Dorsolateral prefrontal cortex (tissue), 120 donors: ENCODE measurements at regions of chr20 and their contacts with region 1.

Region 1: GRCh38 chr20:11917663-11918062 is at the start of gene BTBD3:
- DNase-seq: peak in 9 of 10 donors; percentile 55 to 88 (median 75)
- H3K4me3 ChIP-seq: peak within 1 kb of the TSS; percentile 33 to 79 (median 61)
- H3K27ac ChIP-seq: peak within 1 kb of the TSS; percentile 41 to 95 (median 89)
- H3K27me3 ChIP-seq: no peaks in the 10 kb centered on the region
- CTCF ChIP-seq: peak in 39 of 56 donors; percentile 12 to 56 (median 33)
- total RNA-seq, gene BTBD3: 72.4 to 185 (median 136) TPM

Region 2: GRCh38 chr20:11676630-11677284 is 240.9 kb before region 1 on chr20:
- intact Hi-C with region 1: loop called in 1 of 2 experiments (anchors 10 kb)
- DNase-seq: peak in 4 of 10 donors; percentile 24 to 65 (median 50)
- H3K4me3 ChIP-seq: no peak overlapping the region
- H3K27ac ChIP-seq: peak overlapping the region in 5 of 59 donors; percentile 3 to 61 (median 39)
- H3K27me3 ChIP-seq: no peaks in the 10 kb centered on the region
- CTCF ChIP-seq: peak; percentile 52 to 88 (median 74)

Region 3: GRCh38 chr20:11755071-11755841 is 162.4 kb before region 1 on chr20:
- intact Hi-C with region 1: loop called in 1 of 2 experiments (anchors 10 kb)
- DNase-seq: peak in 1 of 10 donors; percentile 21
- H3K4me3 ChIP-seq: no peak overlapping the region
- H3K27ac ChIP-seq: peak overlapping the region in 19 of 59 donors; percentile 3 to 71 (median 37)
- H3K27me3 ChIP-seq: no peaks in the 10 kb centered on the region
- CTCF ChIP-seq: peak in 52 of 56 donors; percentile 14 to 73 (median 45)

Region 4: GRCh38 chr20:11807066-11808048 is 110.3 kb before region 1 on chr20:
- intact Hi-C with region 1: no loop called
- DNase-seq: no peak
- H3K4me3 ChIP-seq: no peak overlapping the region
- H3K27ac ChIP-seq: no peak overlapping the region
- H3K27me3 ChIP-seq: peaks cover 0 to 5% (median 0%) of the 10 kb centered on the region in 45 donors
- CTCF ChIP-seq: no peak

Region 5: DNA sequence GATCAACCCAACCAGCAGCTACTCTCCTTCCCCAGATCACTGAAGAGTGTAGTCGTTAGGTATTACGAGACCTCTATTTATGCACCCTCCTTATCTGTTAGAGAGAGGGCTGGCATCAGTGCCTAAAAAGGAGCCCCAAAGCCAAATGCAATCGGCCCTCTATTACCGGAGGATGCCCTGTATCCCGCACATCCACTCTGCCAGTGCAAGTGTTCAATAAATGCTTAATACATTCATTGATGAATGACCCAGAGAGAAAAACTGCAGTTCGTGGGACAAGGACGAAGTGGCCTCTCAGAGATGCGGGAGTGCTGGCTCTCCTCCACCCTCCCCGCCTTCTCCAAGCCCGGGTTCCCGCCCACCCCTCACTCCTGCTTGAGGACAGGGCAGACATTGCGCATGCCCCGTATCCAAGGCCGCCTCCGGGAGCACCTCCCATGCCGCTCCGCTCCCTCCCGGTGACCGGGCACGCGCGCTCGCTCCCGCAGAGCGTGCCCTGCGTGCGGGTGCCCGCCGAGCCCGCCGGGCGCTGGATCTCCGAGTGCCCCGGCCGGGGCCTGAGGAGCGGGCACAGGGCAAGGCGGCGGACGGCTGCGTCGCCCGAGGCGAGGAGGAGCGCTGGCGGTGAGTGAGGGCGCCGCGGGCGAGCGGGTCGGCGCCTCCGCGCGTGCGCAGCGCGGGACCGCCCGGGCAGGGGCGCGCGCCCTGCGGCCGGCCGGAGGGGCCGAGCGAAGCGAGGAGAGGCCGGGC is 27.2 kb before region 1 on chr20:
- intact Hi-C with region 1: loop called (anchors 2 kb)
- DNase-seq: peak; percentile 92 to 97 (median 95)
- H3K4me3 ChIP-seq: peak overlapping the region; percentile 52 to 92 (median 77)
- H3K27ac ChIP-seq: peak overlapping the region in 58 of 59 donors; percentile 83 to 99 (median 95)
- H3K27me3 ChIP-seq: no peaks in the 10 kb centered on the region
- CTCF ChIP-seq: peak in 9 of 56 donors; percentile 4 to 28 (median 9)

Region 6: GRCh38 chr20:11993886-11994461 is 76.3 kb after region 1 on chr20:
- intact Hi-C with region 1: loop called (anchors 2 to 10 kb)
- DNase-seq: no peak
- H3K4me3 ChIP-seq: no peak overlapping the region
- H3K27ac ChIP-seq: peak overlapping the region in 56 of 59 donors; percentile 2 to 98 (median 92)
- H3K27me3 ChIP-seq: no peaks in the 10 kb centered on the region
- CTCF ChIP-seq: no peak

Region 7: DNA sequence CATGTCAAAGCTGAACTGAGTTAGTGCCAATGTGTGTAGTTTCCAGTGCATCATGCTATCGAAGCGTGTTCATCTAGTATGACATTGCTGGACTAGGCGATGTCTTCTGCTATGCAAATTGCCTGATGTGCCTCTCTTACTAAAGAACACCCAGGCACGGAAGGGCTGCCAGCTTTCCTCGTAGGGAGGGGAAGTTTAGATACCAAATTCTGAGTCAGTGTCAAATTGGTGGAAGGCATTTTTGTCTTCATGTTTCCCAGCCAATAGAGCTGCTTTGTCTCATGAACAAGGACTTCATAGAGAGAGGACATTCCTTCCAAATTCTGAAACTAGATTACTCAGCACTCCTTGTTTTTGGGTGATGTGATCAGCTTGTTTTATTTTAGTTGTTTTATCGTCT is 320.1 kb after region 1 on chr20:
- intact Hi-C with region 1: loop called (anchors 5 kb)
- DNase-seq: peak; percentile 27 to 90 (median 75)
- H3K4me3 ChIP-seq: peak overlapping the region in 38 of 59 donors; percentile 0 to 50 (median 31)
- H3K27ac ChIP-seq: peak overlapping the region in 58 of 59 donors; percentile 18 to 96 (median 86)
- H3K27me3 ChIP-seq: no peaks in the 10 kb centered on the region
- CTCF ChIP-seq: peak in 3 of 56 donors; percentile 8 to 13 (median 9)